ENCODE measurements at regions of chr1 and their contacts with region 1.

Region 1: GRCh38 chr1:228734881-228735801 is at the start of gene RHOU:
- DNase-seq: peak; percentile 67
- H3K4me3 Mint-ChIP-seq: peak within 1 kb of the TSS; percentile 84
- H3K27ac Mint-ChIP-seq: peak within 1 kb of the TSS; percentile 81
- H3K4me1 Mint-ChIP-seq: peaks cover 29% of the 10 kb centered on the region
- H3K27me3 Mint-ChIP-seq: peaks cover 21% of the 10 kb centered on the region
- total RNA-seq, gene RHOU: 7.9 to 8.4 TPM

Region 2: GRCh38 chr1:228721402-228721801 is 13.7 kb before region 1 on chr1:
- CTCF ChIA-PET with region 1: no interaction called
- POLR2A ChIA-PET with region 1: no interaction called
- DNase-seq: no peak
- H3K4me3 Mint-ChIP-seq: no peak overlapping the region
- H3K27ac Mint-ChIP-seq: no peak overlapping the region
- H3K4me1 Mint-ChIP-seq: no peaks in the 10 kb centered on the region
- H3K27me3 Mint-ChIP-seq: peaks cover 8% of the 10 kb centered on the region

Region 3: GRCh38 chr1:228751360-228752113 is 16.4 kb after region 1 on chr1:
- CTCF ChIA-PET with region 1: no interaction called
- POLR2A ChIA-PET with region 1: no interaction called
- DNase-seq: no peak
- H3K4me3 Mint-ChIP-seq: no peak overlapping the region
- H3K27ac Mint-ChIP-seq: no peak overlapping the region
- H3K4me1 Mint-ChIP-seq: peaks cover 46% of the 10 kb centered on the region
- H3K27me3 Mint-ChIP-seq: peaks cover 36% of the 10 kb centered on the region

Region 4: GRCh38 chr1:228794173-228794572 is 59.0 kb after region 1 on chr1:
- CTCF ChIA-PET with region 1: interaction called, 10 read pairs
- POLR2A ChIA-PET with region 1: no interaction called
- DNase-seq: peak; percentile 62
- H3K4me3 Mint-ChIP-seq: no peak overlapping the region
- H3K27ac Mint-ChIP-seq: no peak overlapping the region
- H3K4me1 Mint-ChIP-seq: peaks cover 32% of the 10 kb centered on the region
- H3K27me3 Mint-ChIP-seq: no peaks in the 10 kb centered on the region

Region 5: GRCh38 chr1:229227298-229227919 is 492.3 kb after region 1 on chr1:
- CTCF ChIA-PET with region 1: interaction called, 23 read pairs
- POLR2A ChIA-PET with region 1: no interaction called
- DNase-seq: peak; percentile 85
- H3K4me3 Mint-ChIP-seq: no peak overlapping the region
- H3K27ac Mint-ChIP-seq: no peak overlapping the region
- H3K4me1 Mint-ChIP-seq: peaks cover 21% of the 10 kb centered on the region
- H3K27me3 Mint-ChIP-seq: peaks cover 2% of the 10 kb centered on the region

Measured in activated CD4-positive, alpha-beta T cell treated with anti-CD3 and anti-CD28 coated beads, Interleukin-2, amount 10 ng/mL, durations not matched to agents 7 days and 5 days (primary cell).